ENCODE measurements at regions of chr11 and their contacts with region 1.

Region 1: GRCh38 chr11:67420646-67421420 is 5.4 kb downstream of the CARNS1 start:
- DNase-seq: peak; percentile 100
- ATAC-seq: peak; percentile 75
- H3K4me3 Mint-ChIP-seq: peak overlapping the region; percentile 84
- H3K27ac Mint-ChIP-seq: peak overlapping the region; percentile 90
- H3K4me1 Mint-ChIP-seq: peaks cover 43% of the 10 kb centered on the region
- H3K27me3 Mint-ChIP-seq: no peaks in the 10 kb centered on the region

Region 2: DNA sequence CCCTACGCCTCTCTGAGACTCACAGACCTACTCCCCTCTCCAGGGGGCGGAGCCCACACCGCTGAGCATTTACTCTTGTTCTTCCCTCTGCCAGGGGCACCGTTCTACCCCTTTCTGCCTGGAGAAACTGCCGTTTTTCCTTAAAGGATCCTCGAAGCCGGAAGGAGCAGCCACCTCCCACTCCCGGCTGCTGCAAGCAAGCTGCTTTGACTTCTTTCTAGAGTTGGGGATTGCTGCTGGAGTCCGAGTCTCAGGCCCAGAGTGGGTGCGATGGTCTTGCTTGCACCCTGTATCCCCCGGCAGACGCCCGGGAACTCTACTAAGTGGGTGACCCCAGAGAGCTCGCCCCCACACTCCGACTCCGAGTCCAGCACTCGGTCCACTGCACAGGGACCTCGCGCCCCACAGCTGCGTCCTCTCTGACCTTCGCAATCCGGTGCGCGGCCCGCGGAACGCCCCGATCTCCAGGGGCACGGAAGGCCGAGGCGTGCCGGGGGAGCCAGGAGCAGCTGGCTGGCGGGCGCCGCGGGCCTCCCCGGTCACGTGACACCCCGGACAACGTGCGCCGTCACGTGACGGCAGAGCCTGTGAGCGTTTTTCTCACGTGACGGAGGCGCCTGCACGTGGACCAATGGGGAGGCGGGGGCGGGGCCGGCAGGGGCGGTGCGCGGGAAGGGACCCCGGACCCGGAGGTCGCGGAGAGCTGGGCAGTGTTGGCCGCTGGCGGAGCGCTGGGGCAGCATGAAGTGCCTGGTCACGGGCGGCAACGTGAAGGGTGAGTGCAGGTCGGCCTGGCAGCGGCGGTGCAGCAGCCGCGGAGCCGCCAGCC is 29.3 kb before region 1 on chr11 and contains the start of gene RAD9A:
- POLR2A ChIA-PET with region 1: interaction called, 30 read pairs
- DNase-seq: peak; percentile 93
- ATAC-seq: peak; percentile 68
- H3K4me3 Mint-ChIP-seq: peak within 1 kb of the TSS; percentile 96
- H3K27ac Mint-ChIP-seq: peak within 1 kb of the TSS; percentile 75
- H3K4me1 Mint-ChIP-seq: peaks cover 36% of the 10 kb centered on the region
- H3K27me3 Mint-ChIP-seq: no peaks in the 10 kb centered on the region
- total RNA-seq, gene RAD9A: 65.3 to 67.1 TPM

Region 3: GRCh38 chr11:67409261-67409666 is 11.6 kb before region 1 on chr11:
- POLR2A ChIA-PET with region 1: interaction called, 247 read pairs
- DNase-seq: peak; percentile 86
- ATAC-seq: peak; percentile 69
- H3K4me3 Mint-ChIP-seq: peak overlapping the region; percentile 98
- H3K27ac Mint-ChIP-seq: peak overlapping the region; percentile 95
- H3K4me1 Mint-ChIP-seq: peaks cover 67% of the 10 kb centered on the region
- H3K27me3 Mint-ChIP-seq: no peaks in the 10 kb centered on the region

Region 4: DNA sequence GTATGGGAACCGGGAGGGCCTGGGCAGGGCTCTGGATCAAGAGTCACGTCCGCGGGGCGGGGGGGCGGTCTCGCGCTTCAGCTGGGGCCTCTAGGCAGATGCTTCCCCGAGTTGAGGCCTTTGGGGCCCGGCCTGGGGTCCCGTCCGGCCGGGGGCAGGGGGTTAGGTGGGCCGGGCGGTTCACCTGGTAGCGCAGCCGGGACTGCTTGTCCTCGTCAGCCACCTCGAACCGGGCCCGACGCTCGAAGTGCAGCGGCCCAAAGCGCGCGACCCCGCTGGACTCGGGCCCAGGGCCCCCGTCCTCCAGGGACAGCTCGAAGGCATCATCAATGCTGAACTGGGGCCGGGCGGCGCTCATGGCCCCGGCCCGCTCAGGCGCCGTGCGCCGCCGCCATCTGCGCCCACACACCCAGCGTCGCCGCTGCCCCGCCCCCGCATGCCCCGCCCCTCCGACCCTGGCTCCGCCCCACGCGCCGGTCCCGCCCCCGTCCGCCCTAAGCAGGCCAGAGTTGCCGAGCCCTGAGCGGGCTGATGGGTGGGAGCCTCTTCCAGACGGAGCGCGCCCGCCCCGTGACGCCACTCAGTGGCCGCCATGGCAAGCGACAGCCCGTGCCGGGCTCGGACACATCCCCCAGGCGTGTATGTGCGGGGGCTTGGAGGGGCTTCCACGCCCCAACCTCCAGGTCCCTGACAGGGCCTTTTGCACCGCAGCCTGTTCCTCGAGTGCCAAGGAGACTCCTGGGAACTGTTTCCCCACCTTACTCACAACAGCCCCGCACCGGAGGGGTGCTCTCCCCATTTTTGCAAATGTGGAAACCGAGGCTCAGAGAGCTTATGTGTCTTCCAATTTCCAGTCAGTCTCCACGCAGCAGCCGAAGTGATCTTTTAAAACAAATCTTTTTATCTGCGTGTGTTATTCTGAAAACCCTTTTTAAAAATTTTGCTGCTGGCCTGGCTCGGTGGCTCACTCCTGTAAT is 48.3 kb after region 1 on chr11 and contains the start of gene TMEM134:
- POLR2A ChIA-PET with region 1: interaction called, 10 read pairs
- DNase-seq: peak; percentile 97
- ATAC-seq: peak; percentile 76
- H3K4me3 Mint-ChIP-seq: peak within 1 kb of the TSS; percentile 95
- H3K27ac Mint-ChIP-seq: peak within 1 kb of the TSS; percentile 79
- H3K4me1 Mint-ChIP-seq: peaks cover 21% of the 10 kb centered on the region
- H3K27me3 Mint-ChIP-seq: no peaks in the 10 kb centered on the region
- total RNA-seq, gene TMEM134: 63.2 to 69.1 TPM

Region 5: GRCh38 chr11:67482825-67483798 is 62.3 kb after region 1 on chr11 and contains the start of gene AIP:
- POLR2A ChIA-PET with region 1: interaction called, 36 read pairs
- DNase-seq: peak; percentile 94
- ATAC-seq: peak; percentile 81
- H3K4me3 Mint-ChIP-seq: peak within 1 kb of the TSS; percentile 93
- H3K27ac Mint-ChIP-seq: peak within 1 kb of the TSS; percentile 100
- H3K4me1 Mint-ChIP-seq: peaks cover 47% of the 10 kb centered on the region
- H3K27me3 Mint-ChIP-seq: peaks cover under 1% of the 10 kb centered on the region
- total RNA-seq, gene AIP: 161 to 166 TPM

Region 6: GRCh38 chr11:67505605-67506396 is 85.0 kb after region 1 on chr11:
- POLR2A ChIA-PET with region 1: interaction called, 10 read pairs
- DNase-seq: peak; percentile 94
- ATAC-seq: peak; percentile 40
- H3K4me3 Mint-ChIP-seq: peak overlapping the region; percentile 93
- H3K27ac Mint-ChIP-seq: peak overlapping the region; percentile 94
- H3K4me1 Mint-ChIP-seq: peaks cover 37% of the 10 kb centered on the region
- H3K27me3 Mint-ChIP-seq: peaks cover 5% of the 10 kb centered on the region